AG04449 (cell line): ENCODE measurements at regions of chr7 and their contacts with region 1.

Region 1: DNA sequence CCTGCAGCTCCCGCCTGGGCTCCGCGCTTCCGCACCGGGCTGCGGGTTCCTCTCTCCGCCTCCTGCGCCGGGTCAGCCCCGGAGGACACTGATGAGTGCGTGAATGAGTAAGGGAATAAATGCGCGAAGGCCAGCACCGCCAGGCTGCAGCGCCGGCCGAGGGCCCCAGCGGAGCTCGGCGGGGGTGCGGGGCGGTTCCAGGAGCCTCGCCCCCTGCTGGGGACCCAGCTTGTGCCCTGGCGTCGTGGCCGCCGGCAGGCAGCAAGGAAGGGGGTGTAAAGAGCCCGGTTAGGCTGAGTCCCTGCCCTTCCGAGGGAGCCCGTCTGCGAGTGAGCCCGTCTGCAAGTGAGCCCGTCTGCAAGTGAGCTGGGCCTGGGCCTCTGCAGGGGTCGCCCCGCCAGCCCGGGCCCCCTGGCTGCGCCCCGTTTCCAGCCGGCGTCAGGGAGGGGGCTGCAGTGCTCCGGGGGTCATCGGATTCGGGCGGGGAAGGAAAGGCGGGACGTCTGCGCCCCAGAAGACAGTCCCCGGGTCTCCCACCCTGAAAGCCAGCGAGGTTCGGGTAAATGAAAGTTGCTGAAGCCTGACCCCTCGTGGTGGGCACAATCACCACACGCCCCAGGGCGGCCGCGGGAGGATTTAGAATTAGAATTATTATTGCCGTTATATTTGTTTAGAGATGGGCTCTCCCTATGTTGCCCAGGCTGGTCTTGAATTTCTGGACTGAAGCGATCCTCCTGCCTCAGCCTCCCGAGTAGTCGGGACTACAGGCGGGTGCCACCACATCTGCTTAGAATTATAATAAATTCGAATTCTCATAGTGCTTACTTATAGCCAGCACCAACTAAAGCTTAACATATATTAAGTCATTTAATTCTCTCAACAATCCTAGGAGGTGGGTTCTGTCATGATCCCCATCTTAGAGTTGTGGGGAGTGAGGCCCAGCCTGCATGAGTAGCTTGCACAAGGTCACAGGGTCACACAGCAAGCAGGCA is 8.6 kb upstream of the CRYGN start:
- DNase-seq: no peak
- H3K4me3 ChIP-seq: peak overlapping the region; percentile 54
- CTCF ChIP-seq: peak; percentile 82

Region 2: GRCh38 chr7:151341357-151342101 is 107.0 kb before region 1 on chr7 and contains the start of gene NUB1:
- CTCF ChIA-PET with region 1: interaction called, 12 read pairs
- POLR2A ChIA-PET with region 1: no interaction called
- DNase-seq: no peak
- H3K4me3 ChIP-seq: peak within 1 kb of the TSS; percentile 76
- CTCF ChIP-seq: no peak

Region 3: GRCh38 chr7:151361193-151361959 is 87.2 kb before region 1 on chr7:
- CTCF ChIA-PET with region 1: interaction called, 270 read pairs
- POLR2A ChIA-PET with region 1: interaction called, 4 read pairs
- DNase-seq: no peak
- H3K4me3 ChIP-seq: no peak overlapping the region
- CTCF ChIP-seq: no peak

Region 4: DNA sequence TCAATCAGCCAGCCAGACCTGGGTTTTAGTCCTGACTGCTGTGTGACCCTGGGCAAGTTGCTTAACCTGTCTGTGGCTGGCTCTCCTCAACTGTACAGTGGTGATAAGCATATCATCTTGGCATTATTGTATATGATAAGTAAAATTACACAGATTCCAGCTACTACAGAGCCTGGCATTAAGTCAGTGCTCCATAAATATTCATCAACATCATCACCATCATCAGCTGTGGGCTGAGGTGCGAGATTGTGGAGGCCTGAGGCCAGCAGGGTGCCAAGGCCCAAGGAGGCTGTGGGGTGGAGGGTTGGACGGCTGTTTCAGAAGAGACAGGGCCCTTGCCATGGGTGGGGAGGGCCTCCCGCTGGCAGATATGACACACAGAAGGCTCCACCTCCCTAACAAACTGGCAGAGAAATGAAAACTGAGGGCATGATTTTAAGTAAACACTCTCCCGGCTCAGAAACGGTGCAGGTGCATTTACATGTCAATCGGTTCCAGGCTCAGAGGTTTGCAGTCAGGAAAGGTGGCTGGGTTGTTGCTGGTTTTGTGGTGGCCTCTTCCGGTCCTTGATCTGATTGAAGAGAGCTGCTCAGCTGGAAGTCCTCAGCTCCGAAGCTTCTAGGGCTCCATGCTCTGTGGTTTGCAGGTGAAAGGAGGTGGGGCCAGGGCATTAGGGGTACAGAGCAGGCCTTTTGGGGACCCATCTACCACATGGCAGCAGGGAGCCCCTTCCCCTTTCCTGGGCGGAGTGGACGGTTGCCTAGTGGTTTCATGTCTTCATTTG is 18.8 kb before region 1 on chr7:
- CTCF ChIA-PET with region 1: interaction called, 58 read pairs
- POLR2A ChIA-PET with region 1: no interaction called
- DNase-seq: no peak
- H3K4me3 ChIP-seq: no peak overlapping the region
- CTCF ChIP-seq: no peak

Region 5: GRCh38 chr7:151468217-151469018 is 19.9 kb after region 1 on chr7:
- CTCF ChIA-PET with region 1: interaction called, 22 read pairs
- POLR2A ChIA-PET with region 1: no interaction called
- DNase-seq: no peak
- H3K4me3 ChIP-seq: no peak overlapping the region
- CTCF ChIP-seq: no peak

Region 6: GRCh38 chr7:151588982-151589381 is 140.4 kb after region 1 on chr7:
- CTCF ChIA-PET with region 1: no interaction called
- POLR2A ChIA-PET with region 1: no interaction called
- DNase-seq: no peak
- H3K4me3 ChIP-seq: no peak overlapping the region
- CTCF ChIP-seq: no peak